A673 (cell line): ENCODE measurements at regions of chr7 and their contacts with region 1.

Region 1: GRCh38 chr7:16028103-16028502 is 341.6 kb upstream of the MEOX2 start:
- DNase-seq: no peak
- H3K4me3 ChIP-seq: no peak overlapping the region
- H3K27ac ChIP-seq: no peak overlapping the region
- H3K4me1 ChIP-seq: no peaks in the 10 kb centered on the region
- H3K27me3 ChIP-seq: no peaks in the 10 kb centered on the region
- CTCF ChIP-seq: no peak

Region 2: DNA sequence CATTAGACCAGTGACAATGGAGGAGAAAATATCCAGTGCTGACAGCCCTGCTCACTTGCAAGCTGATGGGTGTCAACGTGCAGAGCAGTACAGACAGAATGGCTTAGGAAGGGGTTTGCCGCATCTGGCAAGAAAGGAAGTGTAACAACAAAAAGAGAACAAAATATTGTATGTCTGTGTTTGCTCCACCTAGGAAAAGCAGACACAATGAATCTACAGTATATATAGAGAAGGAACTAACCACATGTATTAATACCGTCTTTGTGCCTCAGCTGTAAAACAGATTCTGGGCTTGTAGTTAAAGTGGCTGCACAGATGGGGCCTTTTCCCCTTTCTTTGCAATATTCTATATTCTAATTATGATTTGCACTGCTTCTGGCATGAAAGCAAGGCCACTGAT is 60.6 kb before region 1 on chr7:
- CTCF ChIA-PET with region 1: no interaction called
- POLR2A ChIA-PET with region 1: no interaction called
- intact Hi-C with region 1: loop called (anchors 10 kb)
- DNase-seq: no peak
- H3K4me3 ChIP-seq: no peak overlapping the region
- H3K27ac ChIP-seq: no peak overlapping the region
- H3K4me1 ChIP-seq: no peaks in the 10 kb centered on the region
- H3K27me3 ChIP-seq: no peaks in the 10 kb centered on the region
- CTCF ChIP-seq: no peak